Activated B cell treated with CpG ODN at 0.5 μM for 24 hours (primary cell): ENCODE measurements at regions of chr5 and their contacts with region 1.

Region 1: DNA sequence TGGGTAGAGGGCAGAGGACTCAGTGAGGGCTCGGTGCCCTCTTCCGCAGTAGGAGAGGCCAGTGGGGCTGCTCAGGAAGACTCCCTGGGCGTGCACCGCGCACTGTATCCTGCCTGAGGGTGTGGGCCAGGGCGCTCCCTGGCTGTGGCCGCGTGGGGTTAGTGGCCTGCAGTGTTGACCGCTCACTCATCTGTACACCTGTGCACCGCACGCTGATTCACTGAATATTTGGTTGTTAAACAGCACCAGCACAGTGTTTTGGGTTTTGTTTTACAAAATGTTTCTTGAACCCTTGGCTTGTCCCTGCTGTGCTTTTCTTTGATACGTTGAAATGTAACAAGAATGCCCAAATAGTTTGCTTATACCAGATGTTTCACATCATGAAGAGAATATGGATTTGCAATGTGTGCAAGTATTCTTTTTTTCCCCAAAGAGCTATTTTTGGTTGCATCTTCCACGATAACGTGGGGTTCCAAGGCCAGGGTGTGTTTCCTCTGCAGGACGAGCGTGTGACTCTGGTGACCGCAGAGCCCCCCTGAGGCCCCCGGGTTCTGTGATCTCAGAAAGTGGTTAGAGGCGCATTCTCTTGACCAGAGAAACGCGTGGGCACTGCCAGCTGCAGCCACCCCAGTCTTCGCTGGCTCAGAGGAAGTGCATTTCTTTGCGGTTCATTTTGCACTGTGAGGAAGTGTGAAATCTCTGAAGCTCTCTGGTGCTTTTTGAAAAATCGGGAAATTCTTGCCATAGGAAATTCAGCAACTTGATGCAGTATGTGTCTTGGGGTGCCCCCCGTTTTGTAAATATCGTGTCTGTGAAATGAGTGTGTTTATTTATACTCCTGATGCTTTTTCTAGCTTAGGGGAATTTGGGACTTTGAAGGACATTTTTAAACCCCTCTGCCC is 46.9 kb downstream of the AHRR start:
- DNase-seq: no peak
- ATAC-seq: peak; percentile 59
- H3K4me3 Mint-ChIP-seq: peak overlapping the region; percentile 59
- H3K27ac Mint-ChIP-seq: peak overlapping the region; percentile 50
- H3K4me1 Mint-ChIP-seq: peaks cover 27% of the 10 kb centered on the region
- H3K27me3 Mint-ChIP-seq: peaks cover 9% of the 10 kb centered on the region
- CTCF ChIP-seq: no peak

Region 2: GRCh38 chr5:334903-335739 is 33.3 kb before region 1 on chr5:
- CTCF ChIA-PET with region 1: no interaction called
- POLR2A ChIA-PET with region 1: no interaction called
- intact Hi-C with region 1: loop called (anchors 5 kb)
- DNase-seq: no peak
- ATAC-seq: no peak
- H3K4me3 Mint-ChIP-seq: no peak overlapping the region
- H3K27ac Mint-ChIP-seq: no peak overlapping the region
- H3K4me1 Mint-ChIP-seq: no peaks in the 10 kb centered on the region
- H3K27me3 Mint-ChIP-seq: peaks cover 14% of the 10 kb centered on the region
- CTCF ChIP-seq: no peak

Region 3: DNA sequence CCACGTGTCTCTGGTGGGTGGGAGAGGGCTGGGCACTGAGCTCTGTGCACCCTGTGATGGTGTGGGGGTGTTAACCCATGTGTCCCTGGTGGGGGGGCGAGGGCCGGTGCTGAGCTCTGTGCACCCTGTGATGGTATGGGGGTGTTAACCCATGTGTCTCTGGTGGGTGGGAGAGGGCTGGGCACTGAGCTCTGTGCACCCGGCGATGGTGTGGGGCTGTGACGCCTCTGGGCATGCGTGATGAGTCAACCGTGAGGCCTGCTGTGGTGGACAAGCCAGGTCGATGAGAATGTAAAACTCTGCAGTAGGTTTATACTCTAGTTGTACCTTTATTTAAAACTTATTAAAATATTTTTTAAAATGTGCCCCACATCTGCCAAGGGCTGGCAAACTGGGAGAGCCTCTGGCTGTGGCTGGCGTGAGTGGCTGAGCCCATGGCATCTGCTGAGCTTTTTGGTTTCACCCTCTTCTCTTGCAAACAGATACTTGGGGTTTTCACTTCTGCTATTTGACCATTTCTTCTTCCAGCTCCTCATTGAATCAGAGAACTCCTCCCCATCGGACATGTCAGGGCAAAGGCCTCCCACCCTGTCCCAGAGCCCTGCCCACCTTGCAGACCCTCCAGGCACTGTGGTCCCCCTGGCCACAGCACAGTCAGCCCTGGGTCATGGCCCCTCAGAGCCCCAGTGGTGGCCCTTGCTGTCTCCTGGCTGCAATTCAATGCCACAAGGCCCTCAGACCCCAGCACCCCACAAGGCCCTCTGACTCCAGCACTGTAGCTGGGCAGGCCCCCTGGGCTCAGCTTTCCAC is 56.1 kb after region 1 on chr5:
- CTCF ChIA-PET with region 1: no interaction called
- POLR2A ChIA-PET with region 1: interaction called, 8 read pairs
- intact Hi-C with region 1: loop called (anchors 2 kb)
- DNase-seq: peak; percentile 17
- ATAC-seq: peak; percentile 80
- H3K4me3 Mint-ChIP-seq: no peak overlapping the region
- H3K27ac Mint-ChIP-seq: peak overlapping the region; percentile 37
- H3K4me1 Mint-ChIP-seq: peaks cover 16% of the 10 kb centered on the region
- H3K27me3 Mint-ChIP-seq: peaks cover 3% of the 10 kb centered on the region
- CTCF ChIP-seq: no peak

Region 4: GRCh38 chr5:493119-493701 is 124.8 kb after region 1 on chr5:
- CTCF ChIA-PET with region 1: no interaction called
- POLR2A ChIA-PET with region 1: no interaction called
- intact Hi-C with region 1: no loop called
- DNase-seq: no peak
- ATAC-seq: no peak
- H3K4me3 Mint-ChIP-seq: no peak overlapping the region
- H3K27ac Mint-ChIP-seq: no peak overlapping the region
- H3K4me1 Mint-ChIP-seq: no peaks in the 10 kb centered on the region
- H3K27me3 Mint-ChIP-seq: peaks cover 15% of the 10 kb centered on the region
- CTCF ChIP-seq: no peak